ENCODE measurements at regions of chr5 and their contacts with region 1.

Region 1: GRCh38 chr5:69334793-69335268 is 2.2 kb upstream of the CCDC125 start:
- DNase-seq: peak; percentile 74
- ATAC-seq: peak; percentile 57
- H3K4me3 ChIP-seq: no peak overlapping the region
- H3K27ac ChIP-seq: no peak overlapping the region
- H3K4me1 ChIP-seq: peaks cover 8% of the 10 kb centered on the region
- H3K27me3 ChIP-seq: no peaks in the 10 kb centered on the region
- CTCF ChIP-seq: peak; percentile 67

Region 2: GRCh38 chr5:69234457-69235268 is 100.2 kb before region 1 on chr5 and contains the start of gene CDK7:
- CTCF ChIA-PET with region 1: no interaction called
- POLR2A ChIA-PET with region 1: interaction called, 3 read pairs
- intact Hi-C with region 1: loop called (anchors 1 kb)
- DNase-seq: peak; percentile 91
- ATAC-seq: peak; percentile 91
- H3K4me3 ChIP-seq: peak within 1 kb of the TSS; percentile 90
- H3K27ac ChIP-seq: peak within 1 kb of the TSS; percentile 29; the same call in 1 of the 2 replicates
- H3K4me1 ChIP-seq: peaks cover 33% of the 10 kb centered on the region
- H3K27me3 ChIP-seq: no peaks in the 10 kb centered on the region
- CTCF ChIP-seq: no peak
- total RNA-seq, gene CDK7: 19.9 and 26.6 TPM in 2 replicates

Region 3: DNA sequence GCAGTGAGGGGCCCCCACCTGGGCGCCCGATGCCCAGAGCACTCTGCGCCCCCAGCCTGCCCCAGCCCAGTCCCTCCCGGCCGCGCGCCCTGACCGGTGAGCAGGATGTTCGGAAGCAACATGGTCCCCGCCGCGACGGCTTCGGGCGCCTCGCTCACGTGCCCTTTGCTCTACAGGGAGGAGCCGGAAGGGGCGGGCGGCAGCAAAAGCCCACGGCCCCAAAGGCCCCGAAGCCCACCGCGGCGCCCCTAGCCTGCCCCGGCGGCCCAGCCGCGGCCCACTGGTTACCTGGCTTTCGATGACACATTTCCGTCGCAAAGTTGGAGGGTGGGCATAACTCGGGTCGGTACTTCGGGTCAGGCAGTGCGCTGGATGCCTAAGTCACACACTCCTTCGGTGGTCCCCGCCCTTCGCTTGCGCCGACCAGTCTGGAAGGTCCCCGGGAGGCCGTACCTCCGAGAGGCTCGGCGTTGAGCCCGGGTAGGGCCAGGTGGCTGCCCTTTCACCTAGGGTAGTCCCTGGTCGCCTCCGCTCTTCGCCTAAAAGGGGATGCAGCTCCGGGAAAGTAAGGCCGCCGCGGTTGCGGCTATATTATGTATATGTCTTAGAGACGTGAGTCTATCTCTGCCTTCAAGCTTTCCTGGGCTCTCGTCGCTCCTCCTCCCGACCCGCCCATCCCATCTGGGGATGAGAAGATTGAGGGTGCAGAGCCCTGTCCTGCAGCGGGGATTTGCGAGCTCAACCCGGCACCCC is 34.7 kb after region 1 on chr5 and contains the starts of genes AK6, RAD17 and TAF9:
- CTCF ChIA-PET with region 1: no interaction called
- POLR2A ChIA-PET with region 1: no interaction called
- intact Hi-C with region 1: loop called (anchors 5 kb)
- DNase-seq: peak; percentile 76
- ATAC-seq: peak; percentile 93
- H3K4me3 ChIP-seq: peak within 1 kb of the TSS; percentile 100
- H3K27ac ChIP-seq: peak within 1 kb of the TSS; percentile 95
- H3K4me1 ChIP-seq: peaks cover 16% of the 10 kb centered on the region; the same call in 1 of the 2 replicates
- H3K27me3 ChIP-seq: no peaks in the 10 kb centered on the region
- CTCF ChIP-seq: no peak
- total RNA-seq, gene AK6: 25.3 and 37.4 TPM in 2 replicates
- total RNA-seq, gene RAD17: 13.5 TPM in 2 replicates
- total RNA-seq, gene TAF9: 61.3 and 61.6 TPM in 2 replicates